ENCODE measurements at regions of chr7 and their contacts with region 1.

Region 1: DNA sequence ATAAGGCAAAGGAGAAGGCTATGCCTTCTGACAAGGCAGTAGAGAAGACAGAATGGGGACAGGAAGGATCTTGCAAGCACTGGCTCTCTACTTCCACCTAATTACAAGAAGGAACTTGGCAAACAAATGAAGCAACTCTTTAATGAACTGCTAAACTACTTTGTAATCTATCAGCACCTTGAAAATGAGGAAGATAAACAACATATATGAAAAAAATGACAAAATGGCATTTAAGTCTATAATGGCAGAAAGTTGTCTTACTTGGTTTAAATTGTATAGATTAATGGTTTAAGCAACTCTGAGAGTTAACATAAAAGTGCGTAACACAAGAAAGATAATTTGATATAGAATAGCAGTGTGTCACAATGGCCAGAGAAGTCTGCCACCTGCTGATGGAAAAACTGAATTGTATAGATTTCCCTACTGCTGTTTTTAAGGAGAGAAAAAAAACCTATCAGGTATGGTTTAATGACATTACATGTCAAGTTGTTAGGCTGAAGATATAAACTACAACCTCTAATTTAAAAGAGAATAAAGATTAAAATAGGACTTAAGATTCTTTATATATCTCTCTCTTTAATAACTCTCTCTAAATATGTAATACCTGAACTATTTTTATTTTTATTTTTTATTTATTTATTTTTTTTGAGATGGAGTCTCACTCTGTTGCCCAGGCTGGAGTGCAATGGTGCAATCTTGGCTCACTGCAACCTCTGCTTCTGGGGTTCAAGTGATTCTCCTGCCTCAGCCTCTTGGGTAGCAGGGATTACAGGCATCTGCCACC is 11.8 kb downstream of the NT5C3A start:
- DNase-seq: no peak
- H3K4me3 ChIP-seq: peak overlapping the region in 32 of 59 donors; percentile 2 to 44 (median 27)
- H3K27ac ChIP-seq: peak overlapping the region in 6 of 59 donors; percentile 5 to 66 (median 17)
- H3K27me3 ChIP-seq: no peaks in the 10 kb centered on the region
- CTCF ChIP-seq: peak; percentile 35 to 85 (median 72)

Region 2: GRCh38 chr7:32490127-32490822 is 560.5 kb before region 1 on chr7 and contains the start of gene LSM5:
- intact Hi-C with region 1: loop called in 1 of 2 experiments (anchors 5 kb)
- DNase-seq: peak; percentile 79 to 92 (median 90)
- H3K4me3 ChIP-seq: peak within 1 kb of the TSS; percentile 62 to 96 (median 86)
- H3K27ac ChIP-seq: peak within 1 kb of the TSS; percentile 7 to 96 (median 88)
- H3K27me3 ChIP-seq: no peaks in the 10 kb centered on the region
- CTCF ChIP-seq: peak in 2 of 56 donors; percentile 4 to 13
- total RNA-seq, gene LSM5: 16.7 to 34.2 (median 24.6) TPM

Region 3: DNA sequence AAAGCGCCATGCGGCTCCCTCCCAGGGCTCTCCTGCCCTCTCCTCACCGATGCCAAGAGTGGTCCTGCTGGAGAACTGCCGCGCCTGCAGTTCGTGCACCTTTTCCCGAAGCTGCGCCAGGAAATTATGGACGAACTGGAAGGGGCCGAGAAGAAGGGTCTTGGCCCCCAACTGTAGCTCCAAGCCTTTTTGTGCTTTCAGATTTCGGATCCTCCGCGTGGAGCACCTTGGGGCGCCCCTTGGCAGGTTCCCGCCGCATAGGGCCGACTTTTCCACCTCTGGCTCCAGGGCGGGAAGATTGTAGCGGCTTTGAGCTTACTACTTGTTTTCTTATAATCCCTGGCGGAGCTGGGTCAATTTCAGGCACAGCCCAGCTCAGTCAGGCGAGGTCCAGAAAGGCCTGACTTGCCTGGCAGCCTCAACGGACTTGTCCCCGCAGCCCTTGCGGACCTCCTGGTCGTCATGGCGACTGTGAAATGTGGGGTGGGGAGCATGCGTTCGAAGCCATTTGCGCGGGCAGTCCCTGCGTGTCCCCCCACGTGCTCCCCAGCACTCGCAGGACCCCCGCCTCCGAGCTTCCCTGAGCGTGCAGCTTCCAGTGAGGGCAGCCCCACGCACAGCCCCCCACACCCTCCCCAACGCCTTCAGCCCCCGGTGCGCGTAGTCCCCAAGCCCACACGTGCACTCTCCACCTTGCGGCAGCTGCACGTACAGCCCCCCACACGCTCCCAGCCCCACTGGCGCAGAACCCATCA is 289.1 kb before region 1 on chr7:
- intact Hi-C with region 1: loop called in 1 of 2 experiments (anchors 10 kb)
- DNase-seq: peak in 1 of 10 donors; percentile 48
- H3K4me3 ChIP-seq: peak overlapping the region in 57 of 59 donors; percentile 8 to 67 (median 49)
- H3K27ac ChIP-seq: peak overlapping the region in 1 of 59 donors; percentile 28
- H3K27me3 ChIP-seq: no peaks in the 10 kb centered on the region
- CTCF ChIP-seq: no peak

Region 4: DNA sequence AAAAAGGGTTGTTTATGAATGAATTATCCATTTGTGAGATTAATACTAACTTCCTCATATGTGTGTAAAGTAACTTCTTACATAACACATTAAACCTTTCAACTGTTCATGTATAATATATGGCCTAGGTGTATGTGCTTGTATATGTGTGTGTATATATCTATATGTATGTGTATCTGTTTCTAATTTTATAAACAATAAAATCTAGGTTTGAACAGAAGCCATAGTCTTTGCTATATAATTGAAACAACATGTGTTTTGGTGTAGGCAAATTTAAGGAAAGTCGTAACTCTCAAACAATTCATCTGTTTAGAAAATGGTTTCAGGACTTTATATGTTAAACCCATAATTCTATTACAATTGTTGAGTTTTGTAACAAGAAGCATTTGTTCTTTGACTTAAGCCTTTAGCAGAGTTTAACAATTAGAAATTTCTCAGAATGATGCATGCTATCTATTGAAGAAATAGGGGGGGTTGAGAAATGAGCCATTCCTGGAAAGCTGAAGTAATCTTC is 182.0 kb after region 1 on chr7:
- intact Hi-C with region 1: no loop called
- DNase-seq: no peak
- H3K4me3 ChIP-seq: no peak overlapping the region
- H3K27ac ChIP-seq: no peak overlapping the region
- H3K27me3 ChIP-seq: no peaks in the 10 kb centered on the region
- CTCF ChIP-seq: no peak

Measured in dorsolateral prefrontal cortex (tissue), 120 donors.